GM12878 (cell line): ENCODE measurements at regions of chr1 and their contacts with region 1.

Region 1: DNA sequence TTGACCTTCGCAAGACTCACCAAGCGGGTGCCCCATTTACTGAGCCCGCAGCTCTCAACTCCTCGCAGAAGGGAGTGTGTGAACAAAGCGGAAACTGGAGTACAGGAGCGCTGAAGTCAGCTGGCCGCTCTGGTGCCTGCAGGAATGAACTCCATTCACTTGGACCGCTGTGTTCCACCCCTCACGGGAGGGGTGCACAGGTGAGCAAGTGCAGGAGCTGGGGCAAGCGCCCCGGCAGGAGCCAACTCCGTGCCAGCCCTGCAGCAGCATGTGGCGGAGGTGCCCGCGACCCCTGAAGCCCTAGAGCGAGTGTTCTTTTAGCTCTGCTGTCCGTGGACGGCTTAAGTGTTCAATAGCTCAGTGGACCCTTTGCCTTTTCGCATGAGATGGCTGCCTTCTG is 471.6 kb upstream of the ADGRL4 start:
- DNase-seq: no peak
- ATAC-seq: no peak
- H3K4me3 ChIP-seq: no peak overlapping the region
- H3K27ac ChIP-seq: no peak overlapping the region
- H3K4me1 ChIP-seq: 0 out of 2 replicates have a peak, but pooled peaks cover 3% of the 10 kb centered on the region
- H3K27me3 ChIP-seq: no peaks in the 10 kb centered on the region
- CTCF ChIP-seq: no peak
- EP300 ChIP-seq: no peak
- POLR2A ChIP-seq: no peak
- RAD21 ChIP-seq: no peak

Region 2: DNA sequence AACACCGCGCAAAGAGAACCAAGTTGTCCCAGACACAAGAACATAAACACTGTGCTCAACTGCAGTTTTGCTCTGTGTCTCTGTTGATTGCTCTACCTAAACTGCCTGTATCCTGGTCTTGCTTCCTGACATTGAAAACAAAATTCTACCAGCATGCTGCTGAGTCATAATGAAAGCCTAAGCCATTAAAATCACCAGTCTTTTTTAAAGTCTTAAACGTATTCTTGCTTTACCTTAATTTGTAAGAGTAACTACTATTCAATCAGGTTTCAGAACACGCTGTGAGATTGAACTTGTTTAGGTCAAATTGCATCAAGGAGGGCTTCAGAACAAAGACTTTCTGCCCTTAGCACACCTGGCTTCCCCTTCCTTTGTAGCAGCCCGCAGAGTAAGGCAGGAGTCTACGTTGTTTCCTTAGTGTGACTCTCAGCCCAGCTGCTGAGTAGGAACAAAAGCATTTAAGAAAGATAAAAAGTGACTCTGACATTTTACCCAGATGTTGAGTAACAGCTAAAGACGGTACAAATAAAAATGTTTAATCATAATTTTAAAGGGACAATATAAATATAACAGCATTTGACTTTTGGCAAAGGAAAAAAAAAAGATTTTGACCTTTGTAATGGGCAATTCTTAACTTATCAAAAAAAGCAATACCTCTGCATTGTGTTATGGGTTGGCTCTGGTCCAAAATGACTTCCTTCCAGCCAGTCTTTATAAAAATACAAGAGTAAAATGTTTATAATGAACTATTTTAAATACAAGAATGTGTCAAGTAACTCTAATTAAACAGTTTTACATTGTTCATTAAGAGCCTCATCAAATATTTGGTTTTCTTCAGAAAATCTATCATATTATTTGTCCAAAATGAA is 284.7 kb before region 1 on chr1:
- CTCF ChIA-PET with region 1: no interaction called
- POLR2A ChIA-PET with region 1: no interaction called
- RAD21 ChIA-PET with region 1: no interaction called
- SMC1A ChIA-PET with region 1: no interaction called
- in situ Hi-C with region 1: no loop called
- intact Hi-C with region 1: no loop called
- DNase-seq: peak; percentile 41
- ATAC-seq: peak; percentile 78
- H3K4me3 ChIP-seq: no peak overlapping the region
- H3K27ac ChIP-seq: no peak overlapping the region
- H3K4me1 ChIP-seq: no peaks in the 10 kb centered on the region
- H3K27me3 ChIP-seq: no peaks in the 10 kb centered on the region
- CTCF ChIP-seq: no peak
- EP300 ChIP-seq: no peak
- POLR2A ChIP-seq: no peak
- RAD21 ChIP-seq: no peak

Region 3: GRCh38 chr1:79259388-79260336 is 218.5 kb before region 1 on chr1:
- CTCF ChIA-PET with region 1: no interaction called
- POLR2A ChIA-PET with region 1: no interaction called
- RAD21 ChIA-PET with region 1: no interaction called
- SMC1A ChIA-PET with region 1: no interaction called
- in situ Hi-C with region 1: no loop called
- intact Hi-C with region 1: loop called (anchors 10 kb)
- DNase-seq: no peak
- ATAC-seq: peak; percentile 77
- H3K4me3 ChIP-seq: no peak overlapping the region
- H3K27ac ChIP-seq: no peak overlapping the region
- H3K4me1 ChIP-seq: no peaks in the 10 kb centered on the region
- H3K27me3 ChIP-seq: no peaks in the 10 kb centered on the region
- CTCF ChIP-seq: peak; percentile 39 to 56 (median 44); a peak in 4 of 6 replicates
- EP300 ChIP-seq: no peak
- POLR2A ChIP-seq: no peak
- RAD21 ChIP-seq: peak; percentile 72

Region 4: GRCh38 chr1:79532555-79532954 is 54.4 kb after region 1 on chr1:
- CTCF ChIA-PET with region 1: no interaction called
- POLR2A ChIA-PET with region 1: no interaction called
- RAD21 ChIA-PET with region 1: no interaction called
- SMC1A ChIA-PET with region 1: no interaction called
- in situ Hi-C with region 1: no loop called
- intact Hi-C with region 1: no loop called
- DNase-seq: no peak
- ATAC-seq: no peak
- H3K4me3 ChIP-seq: no peak overlapping the region
- H3K27ac ChIP-seq: no peak overlapping the region
- H3K4me1 ChIP-seq: no peaks in the 10 kb centered on the region
- H3K27me3 ChIP-seq: no peaks in the 10 kb centered on the region
- CTCF ChIP-seq: no peak
- EP300 ChIP-seq: no peak
- POLR2A ChIP-seq: no peak
- RAD21 ChIP-seq: no peak